HCT116 (cell line): ENCODE measurements at regions of chr18 and their contacts with region 1.

Region 1: DNA sequence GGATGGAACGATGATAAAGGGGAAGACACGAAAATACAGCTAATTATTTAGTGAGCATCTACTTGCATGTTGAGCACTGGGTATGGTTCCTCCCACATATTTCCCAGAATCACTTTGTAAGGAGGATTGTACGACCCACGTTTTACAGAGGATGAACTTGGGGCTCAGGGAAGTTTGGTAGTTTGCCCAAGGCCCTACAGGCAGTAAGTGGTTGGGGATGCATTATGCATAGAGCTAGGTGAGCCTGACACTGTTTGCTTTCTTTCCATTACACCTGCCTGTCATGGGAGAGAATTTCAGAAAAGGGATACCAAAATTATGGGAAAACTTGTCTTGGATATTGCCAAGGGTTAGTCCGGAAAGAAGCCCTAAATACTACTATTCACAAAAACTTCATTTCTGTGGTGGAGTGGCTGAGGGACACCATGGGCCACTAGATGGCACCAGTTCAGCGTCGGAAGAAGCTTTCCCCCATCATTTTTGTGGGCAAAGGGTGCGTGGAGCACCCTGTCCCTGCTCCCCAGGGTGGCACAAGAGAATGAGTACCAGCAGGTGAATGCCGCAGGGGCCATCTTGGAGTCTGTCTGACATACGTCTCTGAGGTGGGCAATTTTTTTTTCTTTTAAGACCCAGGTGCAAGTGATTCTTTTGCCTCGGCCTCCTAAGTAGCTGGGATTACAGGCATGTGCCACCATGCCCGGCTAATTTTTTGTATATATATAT is 23.5 kb upstream of the C18orf32 start:
- DNase-seq: peak; percentile 73
- ATAC-seq: peak; percentile 97
- H3K4me3 ChIP-seq: no peak overlapping the region
- H3K27ac ChIP-seq: no peak overlapping the region
- H3K4me1 ChIP-seq: no peaks in the 10 kb centered on the region
- H3K27me3 ChIP-seq: no peaks in the 10 kb centered on the region
- CTCF ChIP-seq: peak; percentile 87 to 93 (median 88)
- POLR2A ChIP-seq: no peak
- RAD21 ChIP-seq: peak; percentile 97

Region 2: DNA sequence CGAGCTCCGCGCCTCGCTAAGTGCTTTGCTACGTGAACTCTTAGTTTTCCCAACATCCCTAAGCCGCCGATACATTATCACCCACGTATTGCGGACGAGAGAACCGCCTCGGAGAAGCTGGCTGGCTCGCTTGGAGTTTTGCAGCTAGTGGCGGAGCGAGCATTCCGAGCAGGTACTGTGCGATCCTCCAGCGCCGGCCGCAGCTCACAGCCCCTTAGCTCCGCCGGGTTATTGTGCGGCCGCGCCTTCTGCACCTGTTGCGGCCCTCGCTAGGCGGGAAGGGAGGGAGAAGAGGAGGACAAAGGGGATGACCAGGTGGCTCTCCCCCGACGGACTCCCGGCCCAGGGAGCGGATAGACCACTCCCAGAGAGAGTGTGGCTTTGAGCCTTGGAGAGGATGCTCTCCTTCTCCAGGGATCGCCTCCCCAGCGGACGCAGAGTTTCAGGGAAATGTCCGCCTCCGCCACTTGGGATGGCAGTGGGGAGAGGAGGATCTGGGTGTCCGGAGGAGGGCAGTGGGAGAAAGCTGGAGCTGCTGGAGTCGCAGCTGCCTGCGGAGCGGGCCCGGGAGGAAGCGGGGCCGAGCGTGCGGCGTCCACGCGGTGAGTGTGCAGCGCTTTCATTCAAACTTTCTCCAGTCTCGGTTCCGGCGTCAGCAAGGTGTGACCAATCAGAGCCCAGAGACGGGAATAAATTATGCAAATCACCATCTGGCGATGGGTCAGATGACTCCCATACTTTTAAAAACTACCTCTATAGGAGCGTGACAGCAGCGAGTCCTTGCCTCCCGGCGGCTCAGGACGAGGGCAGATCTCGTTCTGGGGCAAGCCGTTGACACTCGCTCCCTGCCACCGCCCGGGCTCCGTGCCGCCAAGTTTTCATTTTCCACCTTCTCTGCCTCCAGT is 51.0 kb after region 1 on chr18 and contains the start of gene LIPG:
- CTCF ChIA-PET with region 1: no interaction called
- POLR2A ChIA-PET with region 1: interaction called, 3 read pairs
- RAD21 ChIA-PET with region 1: interaction called in 1 of 2 experiments, 3 read pairs
- intact Hi-C with region 1: loop called (anchors 1 kb)
- DNase-seq: peak; percentile 57
- ATAC-seq: peak; percentile 73
- H3K4me3 ChIP-seq: peak within 1 kb of the TSS; percentile 28 to 50
- H3K27ac ChIP-seq: peak within 1 kb of the TSS; percentile 21; the same call in 1 of the 2 replicates
- H3K4me1 ChIP-seq: peaks cover 21 to 38% of the 10 kb centered on the region in 2 experiments
- H3K27me3 ChIP-seq: peaks cover 4% of the 10 kb centered on the region; the same call in 1 of the 2 replicates
- CTCF ChIP-seq: no peak
- POLR2A ChIP-seq: no peak
- RAD21 ChIP-seq: no peak
- total RNA-seq, gene LIPG: 2.6 TPM

Region 3: DNA sequence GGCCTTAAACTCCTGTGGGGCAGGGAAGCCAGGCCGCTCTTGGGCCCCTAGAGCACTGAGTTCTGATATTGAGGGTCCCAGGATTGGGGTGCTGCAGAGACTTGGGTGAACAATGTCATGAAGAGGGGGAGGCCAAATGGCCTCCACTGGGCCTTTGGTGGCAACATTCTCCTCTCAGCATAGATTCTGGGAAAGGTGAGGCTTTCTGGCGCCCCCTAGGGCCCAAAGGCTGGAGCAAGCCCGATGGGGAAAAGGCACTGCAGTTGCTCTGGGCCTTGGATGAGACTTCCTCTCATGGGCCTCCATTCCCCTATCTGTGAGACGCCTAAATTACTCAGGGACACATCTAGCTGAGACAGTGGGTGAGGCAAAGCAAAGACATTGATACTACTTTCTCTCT is 218.0 kb after region 1 on chr18:
- CTCF ChIA-PET with region 1: interaction called, 10 read pairs
- POLR2A ChIA-PET with region 1: no interaction called
- RAD21 ChIA-PET with region 1: no interaction called
- intact Hi-C with region 1: loop called (anchors 5 kb)
- DNase-seq: peak; percentile 47
- ATAC-seq: peak; percentile 52
- H3K4me3 ChIP-seq: no peak overlapping the region
- H3K27ac ChIP-seq: no peak overlapping the region; the same call in 1 of the 2 replicates
- H3K4me1 ChIP-seq: peaks cover 34 to 43% of the 10 kb centered on the region in 2 experiments
- H3K27me3 ChIP-seq: no peaks in the 10 kb centered on the region
- CTCF ChIP-seq: peak in 2 of 3 experiments; percentile 84 to 95; a peak in 4 of 6 replicates
- POLR2A ChIP-seq: no peak
- RAD21 ChIP-seq: no peak

Region 4: DNA sequence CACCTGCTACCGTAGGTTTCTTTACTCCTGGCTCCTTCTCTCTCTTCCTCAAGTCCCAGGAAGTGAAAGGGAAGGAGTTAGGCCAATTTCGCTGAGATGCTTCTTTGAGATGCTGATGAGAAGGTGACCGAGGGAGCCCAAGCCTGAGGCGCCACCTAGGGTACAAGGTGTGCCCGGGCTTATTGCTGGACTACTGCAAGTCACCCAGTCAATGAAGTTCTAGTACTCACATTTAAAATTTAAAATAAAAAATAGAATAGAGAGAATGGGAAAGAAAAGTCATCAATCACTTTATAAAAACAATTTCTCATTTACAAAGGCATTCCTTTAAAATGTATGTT is 257.5 kb after region 1 on chr18:
- CTCF ChIA-PET with region 1: interaction called, 7 read pairs
- POLR2A ChIA-PET with region 1: no interaction called
- RAD21 ChIA-PET with region 1: interaction called in 1 of 2 experiments, 4 read pairs
- intact Hi-C with region 1: loop called (anchors 1 kb)
- DNase-seq: peak; percentile 62
- ATAC-seq: peak; percentile 94
- H3K4me3 ChIP-seq: no peak overlapping the region
- H3K27ac ChIP-seq: no peak overlapping the region
- H3K4me1 ChIP-seq: no peaks in the 10 kb centered on the region
- H3K27me3 ChIP-seq: no peaks in the 10 kb centered on the region
- CTCF ChIP-seq: peak; percentile 74 to 83 (median 77); a peak in 5 of 6 replicates
- POLR2A ChIP-seq: no peak
- RAD21 ChIP-seq: peak; percentile 94